Transverse colon (tissue), 4 donors: ENCODE measurements at regions of chr15 and their contacts with region 1.

Region 1: DNA sequence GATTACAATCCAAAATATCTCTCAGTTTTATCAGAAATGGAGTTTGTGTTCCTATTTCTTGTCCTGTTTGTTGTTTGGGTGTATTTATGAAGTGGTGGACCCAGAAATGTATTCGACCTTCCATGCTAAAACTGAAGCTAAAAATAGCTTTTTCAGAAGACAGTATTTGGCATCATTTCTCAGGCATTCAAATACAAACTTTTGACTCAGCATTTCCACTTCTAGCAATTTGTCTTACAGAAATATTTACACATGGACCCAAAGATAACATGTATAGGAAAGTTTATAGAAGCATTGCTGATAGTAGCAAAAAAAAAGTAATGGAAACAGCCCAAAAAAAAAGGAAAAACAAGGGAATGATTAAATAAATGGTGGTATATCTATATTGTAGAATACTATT is 156.3 kb downstream of the HCN4 start:
- DNase-seq: no peak
- H3K4me3 ChIP-seq: no peak overlapping the region
- H3K27ac ChIP-seq: no peak overlapping the region
- H3K4me1 ChIP-seq: no peaks in the 10 kb centered on the region
- H3K27me3 ChIP-seq: no peaks in the 10 kb centered on the region
- CTCF ChIP-seq: no peak
- EP300 ChIP-seq: no peak
- POLR2A ChIP-seq: no peak

Region 2: GRCh38 chr15:72161361-72162260 is 1050.8 kb before region 1 on chr15:
- in situ Hi-C with region 1: no loop called
- intact Hi-C with region 1: loop called (anchors 5 kb)
- DNase-seq: no peak
- H3K4me3 ChIP-seq: no peak overlapping the region
- H3K27ac ChIP-seq: no peak overlapping the region
- H3K4me1 ChIP-seq: peaks cover 0 to under 1% (median 0%) of the 10 kb centered on the region in 4 donors
- H3K27me3 ChIP-seq: no peaks in the 10 kb centered on the region
- CTCF ChIP-seq: no peak
- EP300 ChIP-seq: no peak
- POLR2A ChIP-seq: no peak

Region 3: GRCh38 chr15:73732930-73733329 is 520.5 kb after region 1 on chr15:
- in situ Hi-C with region 1: no loop called
- intact Hi-C with region 1: no loop called
- DNase-seq: no peak
- H3K4me3 ChIP-seq: no peak overlapping the region
- H3K27ac ChIP-seq: no peak overlapping the region
- H3K4me1 ChIP-seq: no peaks in the 10 kb centered on the region
- H3K27me3 ChIP-seq: no peaks in the 10 kb centered on the region
- CTCF ChIP-seq: no peak
- EP300 ChIP-seq: no peak
- POLR2A ChIP-seq: no peak